ENCODE measurements at regions of chr11 and their contacts with region 1.

Region 1: GRCh38 chr11:63553741-63554151 is 9.4 kb downstream of the PLAAT2 start:
- DNase-seq: peak; percentile 83
- ATAC-seq: peak; percentile 79
- H3K4me3 Mint-ChIP-seq: peak overlapping the region; percentile 50
- H3K27ac Mint-ChIP-seq: peak overlapping the region; percentile 88
- H3K4me1 Mint-ChIP-seq: peaks cover 51% of the 10 kb centered on the region
- H3K27me3 Mint-ChIP-seq: no peaks in the 10 kb centered on the region

Region 2: DNA sequence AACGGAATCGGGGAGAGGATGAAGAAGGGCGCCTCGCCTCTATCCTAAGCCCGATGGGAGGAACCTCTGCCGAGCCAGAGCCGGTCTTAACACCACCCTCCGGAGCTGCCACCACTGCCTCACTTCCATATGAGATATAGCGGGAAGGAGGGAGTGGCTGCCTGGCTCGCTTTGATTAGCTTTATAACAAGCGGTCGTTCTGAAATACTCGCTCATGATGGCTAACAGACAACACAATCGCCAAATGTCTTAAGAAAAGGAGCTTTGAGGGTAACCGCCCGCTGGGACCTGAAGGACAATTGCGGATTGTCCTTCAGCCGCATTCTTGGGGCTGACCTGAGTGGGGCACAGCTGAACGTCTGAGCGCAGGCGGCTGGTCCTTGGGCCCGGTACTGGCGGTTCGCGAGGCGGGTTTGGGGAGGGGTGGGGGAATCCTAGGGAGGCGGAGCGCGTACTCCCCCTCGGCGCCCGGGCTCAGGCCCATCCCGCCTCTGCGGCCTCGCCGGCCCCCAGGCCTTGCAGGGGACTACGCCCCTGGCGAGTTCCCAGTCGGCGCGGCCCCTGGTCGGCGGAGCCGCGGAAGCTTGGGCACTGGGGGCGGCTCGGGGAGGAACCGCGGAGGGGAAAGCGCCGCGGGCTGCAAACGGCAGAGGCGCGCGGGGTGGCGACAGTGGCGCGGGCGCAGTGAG is 63.1 kb before region 1 on chr11 and contains the start of gene PLAAT5:
- CTCF ChIA-PET with region 1: no interaction called
- DNase-seq: no peak
- ATAC-seq: peak; percentile 64
- H3K4me3 Mint-ChIP-seq: peak within 1 kb of the TSS; percentile 71
- H3K27ac Mint-ChIP-seq: no peak within 1 kb of the TSS
- H3K4me1 Mint-ChIP-seq: peaks cover 9% of the 10 kb centered on the region
- H3K27me3 Mint-ChIP-seq: peaks cover 53% of the 10 kb centered on the region
- total RNA-seq, gene PLAAT5: 0.19 to 0.26 TPM

Region 3: DNA sequence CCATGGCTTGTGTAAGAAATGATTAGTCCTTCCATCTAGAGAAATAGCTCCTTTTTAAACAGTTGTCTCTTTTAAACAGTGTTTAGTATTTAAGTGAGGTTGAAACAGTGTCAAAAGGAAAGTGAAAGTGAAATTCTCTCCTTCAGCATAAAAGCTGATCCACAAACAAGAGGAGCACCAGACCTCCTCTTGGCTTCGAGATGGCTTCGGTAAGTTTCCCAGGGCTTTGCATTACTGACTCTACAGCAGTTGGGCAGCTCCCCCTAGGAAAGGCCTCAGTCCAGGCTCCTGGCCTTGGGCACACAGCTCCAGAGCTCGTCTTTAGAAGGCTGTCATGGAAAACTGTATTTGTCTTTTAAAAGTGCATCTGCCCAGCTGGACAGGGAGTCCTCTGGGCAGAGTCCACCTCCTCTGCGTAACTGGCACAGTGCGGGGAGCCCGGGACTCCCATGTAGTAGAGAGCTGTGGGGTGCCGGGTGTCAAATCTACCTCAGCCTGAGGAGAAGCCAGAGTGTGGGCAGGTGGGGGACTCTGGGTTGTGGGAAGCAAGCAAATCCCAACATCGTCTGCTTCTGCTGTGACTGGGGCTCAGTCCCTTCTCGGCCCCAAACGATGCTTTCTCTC is 17.0 kb before region 1 on chr11 and contains the start of gene PLAAT4:
- CTCF ChIA-PET with region 1: interaction called, 46 read pairs
- DNase-seq: peak; percentile 58
- ATAC-seq: peak; percentile 50
- H3K4me3 Mint-ChIP-seq: peak within 1 kb of the TSS; percentile 83
- H3K27ac Mint-ChIP-seq: peak within 1 kb of the TSS; percentile 95
- H3K4me1 Mint-ChIP-seq: peaks cover 71% of the 10 kb centered on the region
- H3K27me3 Mint-ChIP-seq: no peaks in the 10 kb centered on the region
- total RNA-seq, gene PLAAT4: 85.3 to 128 TPM

Region 4: GRCh38 chr11:63573881-63574855 is 20.4 kb after region 1 on chr11:
- CTCF ChIA-PET with region 1: interaction called, 12 read pairs
- DNase-seq: peak; percentile 79
- ATAC-seq: peak; percentile 96
- H3K4me3 Mint-ChIP-seq: peak overlapping the region; percentile 73
- H3K27ac Mint-ChIP-seq: peak overlapping the region; percentile 84
- H3K4me1 Mint-ChIP-seq: peaks cover 29% of the 10 kb centered on the region
- H3K27me3 Mint-ChIP-seq: peaks cover 6% of the 10 kb centered on the region

Measured in activated CD8-positive, alpha-beta memory T cell treated with anti-CD3 and anti-CD28 coated beads, Interleukin-2, amount 10 ng/mL, durations not matched to agents 7 days and 5 days (primary cell).